ENCODE measurements at regions of chr2 and their contacts with region 1.

Region 1: GRCh38 chr2:239401067-239401880 is 454 bp upstream of the HDAC4 start:
- DNase-seq: peak; percentile 99 to 100 (median 99)
- ATAC-seq: peak; percentile 97 to 98 (median 98)
- H3K4me3 ChIP-seq: peak overlapping the region; percentile 32 to 91 (median 74)
- H3K27ac ChIP-seq: peak overlapping the region; percentile 94 to 100 (median 99)
- H3K4me1 ChIP-seq: peaks cover 0 to 42% (median 24%) of the 10 kb centered on the region in 12 donors
- H3K27me3 ChIP-seq: no peaks in the 10 kb centered on the region
- CTCF ChIP-seq: no peak
- POLR2A ChIP-seq: peak; percentile 31 to 94

Region 2: GRCh38 chr2:239087046-239087710 is 314.1 kb before region 1 on chr2:
- intact Hi-C with region 1: no loop called
- DNase-seq: no peak
- ATAC-seq: no peak
- H3K4me3 ChIP-seq: no peak overlapping the region
- H3K27ac ChIP-seq: no peak overlapping the region
- H3K4me1 ChIP-seq: no peaks in the 10 kb centered on the region
- H3K27me3 ChIP-seq: no peaks in the 10 kb centered on the region
- CTCF ChIP-seq: no peak
- POLR2A ChIP-seq: no peak

Region 3: GRCh38 chr2:239143858-239144718 is 257.2 kb before region 1 on chr2:
- intact Hi-C with region 1: loop called in 2 of 10 experiments (anchors 10 kb)
- DNase-seq: peak in 2 of 5 donors; percentile 47 to 52
- ATAC-seq: peak; percentile 7 to 73 (median 64)
- H3K4me3 ChIP-seq: no peak overlapping the region
- H3K27ac ChIP-seq: peak overlapping the region in 1 of 12 donors; percentile 21
- H3K4me1 ChIP-seq: no peaks in the 10 kb centered on the region
- H3K27me3 ChIP-seq: no peaks in the 10 kb centered on the region
- CTCF ChIP-seq: peak; percentile 32 to 69 (median 63)
- POLR2A ChIP-seq: no peak

Region 4: GRCh38 chr2:239223310-239224198 is 177.7 kb before region 1 on chr2:
- intact Hi-C with region 1: loop called in 3 of 10 experiments (anchors 5 to 10 kb)
- DNase-seq: peak in 2 of 5 donors; percentile 48 to 49
- ATAC-seq: peak in 3 of 4 donors; percentile 23 to 43 (median 32)
- H3K4me3 ChIP-seq: peak overlapping the region in 1 of 12 donors; percentile 12
- H3K27ac ChIP-seq: peak overlapping the region in 11 of 12 donors; percentile 79 to 93 (median 83)
- H3K4me1 ChIP-seq: peaks cover 12 to 87% (median 71%) of the 10 kb centered on the region in 12 donors
- H3K27me3 ChIP-seq: no peaks in the 10 kb centered on the region
- CTCF ChIP-seq: no peak
- POLR2A ChIP-seq: no peak

Region 5: DNA sequence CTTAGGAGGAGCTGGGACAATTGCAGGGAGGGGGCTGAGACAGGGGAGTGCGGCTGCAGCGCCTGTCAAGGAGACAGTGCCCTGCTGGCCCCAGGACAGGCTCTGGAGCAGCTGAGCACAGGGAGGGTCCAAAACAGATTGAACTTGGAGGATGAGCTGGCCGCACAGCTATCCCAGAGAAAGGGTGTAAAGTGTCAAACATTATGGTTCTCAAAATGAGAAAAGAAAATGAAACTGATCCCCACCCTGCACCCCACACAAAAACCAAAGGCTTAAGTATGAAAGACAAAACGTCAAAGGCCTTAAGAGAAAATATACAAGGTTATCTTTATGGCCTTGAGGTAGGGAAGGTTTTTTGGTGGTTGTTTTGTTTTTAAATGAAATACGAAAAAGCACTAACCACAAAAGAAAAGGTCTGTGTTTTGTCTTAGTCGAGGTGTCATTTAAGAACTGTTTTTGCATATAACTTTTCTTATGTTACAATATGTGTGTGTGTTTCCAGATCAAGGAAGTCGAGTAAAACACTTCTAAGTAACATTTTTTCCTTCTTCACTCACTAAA is 112.2 kb before region 1 on chr2:
- intact Hi-C with region 1: loop called in 1 of 10 experiments (anchors 10 kb)
- DNase-seq: peak in 2 of 5 donors; percentile 42 to 46
- ATAC-seq: peak in 3 of 4 donors; percentile 25 to 37 (median 35)
- H3K4me3 ChIP-seq: peak overlapping the region in 1 of 12 donors; percentile 3
- H3K27ac ChIP-seq: peak overlapping the region; percentile 18 to 83 (median 52)
- H3K4me1 ChIP-seq: peaks cover 0 to 93% (median 73%) of the 10 kb centered on the region in 12 donors
- H3K27me3 ChIP-seq: no peaks in the 10 kb centered on the region
- CTCF ChIP-seq: no peak
- POLR2A ChIP-seq: no peak

Region 6: GRCh38 chr2:239318790-239319661 is 82.2 kb before region 1 on chr2:
- intact Hi-C with region 1: loop called in 7 of 10 experiments (anchors 5 to 10 kb)
- DNase-seq: peak in 2 of 5 donors; percentile 60 to 65
- ATAC-seq: peak in 3 of 4 donors; percentile 52 to 60 (median 57)
- H3K4me3 ChIP-seq: peak overlapping the region in 10 of 12 donors; percentile 6 to 54 (median 44)
- H3K27ac ChIP-seq: peak overlapping the region in 11 of 12 donors; percentile 45 to 90 (median 80)
- H3K4me1 ChIP-seq: peaks cover 5 to 68% (median 34%) of the 10 kb centered on the region in 12 donors
- H3K27me3 ChIP-seq: no peaks in the 10 kb centered on the region
- CTCF ChIP-seq: no peak
- POLR2A ChIP-seq: no peak

Region 7: GRCh38 chr2:240136013-240136670 is 734.9 kb after region 1 on chr2 and contains the start of gene COPS9:
- intact Hi-C with region 1: loop called in 1 of 10 experiments (anchors 10 kb)
- DNase-seq: peak; percentile 86 to 94 (median 89)
- ATAC-seq: peak; percentile 90 to 99 (median 98)
- H3K4me3 ChIP-seq: peak within 1 kb of the TSS; percentile 70 to 99 (median 92)
- H3K27ac ChIP-seq: peak within 1 kb of the TSS; percentile 21 to 85 (median 72)
- H3K4me1 ChIP-seq: peaks cover 5 to 22% (median 10%) of the 10 kb centered on the region in 12 donors
- H3K27me3 ChIP-seq: no peaks in the 10 kb centered on the region
- CTCF ChIP-seq: peak in 1 of 12 donors; percentile 40
- POLR2A ChIP-seq: peak in 1 of 2 donors; percentile 48
- total RNA-seq, gene COPS9: 130 to 262 (median 166) TPM